T47D (cell line): ENCODE measurements at regions of chr9 and their contacts with region 1.

Region 1: GRCh38 chr9:33225319-33226149 is 14.4 kb upstream of the SPINK4 start:
- DNase-seq: peak in 1 of 2 experiments; percentile 82

Region 2: DNA sequence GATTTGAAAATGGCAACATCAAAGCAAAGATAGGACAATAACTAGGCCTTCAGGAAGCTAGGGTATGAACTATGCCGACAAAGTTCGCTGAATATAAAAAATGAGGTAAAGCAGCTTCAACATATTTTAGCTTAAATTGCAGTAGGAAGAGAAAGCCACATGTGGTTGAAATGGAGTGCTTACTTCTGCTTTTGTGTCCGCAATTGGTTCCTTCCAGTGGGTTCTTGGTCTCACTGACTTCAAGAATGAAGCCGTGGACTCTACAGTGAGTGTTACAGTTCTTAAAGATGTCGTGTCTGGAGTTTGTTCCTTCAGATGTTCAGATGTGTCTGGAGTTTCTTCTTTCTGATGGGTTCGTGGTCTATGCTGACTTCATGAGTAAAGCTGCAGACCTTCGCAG is 319.3 kb before region 1 on chr9:
- in situ Hi-C with region 1: no loop called
- DNase-seq: no peak

Region 3: GRCh38 chr9:33076358-33077004 is 149.1 kb before region 1 on chr9 and contains the start of gene SMU1:
- in situ Hi-C with region 1: loop called (anchors 10 kb)
- DNase-seq: peak; percentile 75 to 96